ENCODE measurements at regions of chr19 and their contacts with region 1.

Region 1: GRCh38 chr19:49911381-49912145 is 14.9 kb upstream of the IL4I1 start:
- DNase-seq: no peak
- ATAC-seq: peak; percentile 80
- H3K4me3 Mint-ChIP-seq: peak overlapping the region; percentile 68
- H3K27ac Mint-ChIP-seq: peak overlapping the region; percentile 89
- H3K4me1 Mint-ChIP-seq: peaks cover 76% of the 10 kb centered on the region
- H3K27me3 Mint-ChIP-seq: no peaks in the 10 kb centered on the region
- CTCF ChIP-seq: no peak

Region 2: DNA sequence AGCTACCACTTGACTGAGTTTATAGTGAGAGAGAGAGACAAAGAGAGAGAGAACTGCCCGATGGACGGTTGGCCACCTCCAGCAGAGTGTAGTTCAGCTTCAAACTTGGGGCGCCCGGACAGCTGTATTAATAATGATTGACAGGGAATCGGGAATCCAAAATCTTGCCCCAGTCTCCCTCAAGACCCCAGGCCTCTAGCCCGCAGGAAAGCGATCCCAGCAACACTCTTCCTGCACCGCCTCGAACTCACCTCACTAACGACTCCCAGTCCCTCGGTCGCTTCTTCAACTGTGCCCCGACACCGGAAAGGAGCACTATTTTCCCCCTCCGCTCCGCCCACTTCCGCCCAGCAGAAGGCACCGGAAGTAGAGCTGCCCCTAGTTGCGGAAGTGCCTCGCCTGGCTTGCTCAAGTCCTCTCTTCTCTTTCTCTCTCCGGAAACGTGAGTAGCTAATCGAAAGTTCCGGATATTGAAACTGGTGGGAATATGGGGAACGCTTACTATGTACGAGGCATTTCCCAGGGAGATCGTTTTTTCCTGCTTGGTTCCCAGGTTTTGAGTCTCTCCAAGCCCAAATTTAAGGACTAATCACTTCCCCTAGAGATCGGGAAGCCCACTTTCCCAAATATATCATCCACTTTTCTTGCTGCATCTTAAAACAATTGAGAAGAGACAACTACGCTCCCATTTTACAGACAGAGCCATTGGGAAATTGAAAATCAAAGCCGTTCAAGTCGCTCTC is 331.1 kb before region 1 on chr19 and contains the start of gene NOSIP:
- CTCF ChIA-PET with region 1: no interaction called
- POLR2A ChIA-PET with region 1: no interaction called
- intact Hi-C with region 1: no loop called
- DNase-seq: peak; percentile 87
- ATAC-seq: peak; percentile 98
- H3K4me3 Mint-ChIP-seq: peak within 1 kb of the TSS; percentile 92
- H3K27ac Mint-ChIP-seq: peak within 1 kb of the TSS; percentile 84
- H3K4me1 Mint-ChIP-seq: peaks cover 24% of the 10 kb centered on the region
- H3K27me3 Mint-ChIP-seq: no peaks in the 10 kb centered on the region
- CTCF ChIP-seq: no peak
- total RNA-seq, gene NOSIP: 49.9 and 54.8 TPM in 2 replicates

Region 3: DNA sequence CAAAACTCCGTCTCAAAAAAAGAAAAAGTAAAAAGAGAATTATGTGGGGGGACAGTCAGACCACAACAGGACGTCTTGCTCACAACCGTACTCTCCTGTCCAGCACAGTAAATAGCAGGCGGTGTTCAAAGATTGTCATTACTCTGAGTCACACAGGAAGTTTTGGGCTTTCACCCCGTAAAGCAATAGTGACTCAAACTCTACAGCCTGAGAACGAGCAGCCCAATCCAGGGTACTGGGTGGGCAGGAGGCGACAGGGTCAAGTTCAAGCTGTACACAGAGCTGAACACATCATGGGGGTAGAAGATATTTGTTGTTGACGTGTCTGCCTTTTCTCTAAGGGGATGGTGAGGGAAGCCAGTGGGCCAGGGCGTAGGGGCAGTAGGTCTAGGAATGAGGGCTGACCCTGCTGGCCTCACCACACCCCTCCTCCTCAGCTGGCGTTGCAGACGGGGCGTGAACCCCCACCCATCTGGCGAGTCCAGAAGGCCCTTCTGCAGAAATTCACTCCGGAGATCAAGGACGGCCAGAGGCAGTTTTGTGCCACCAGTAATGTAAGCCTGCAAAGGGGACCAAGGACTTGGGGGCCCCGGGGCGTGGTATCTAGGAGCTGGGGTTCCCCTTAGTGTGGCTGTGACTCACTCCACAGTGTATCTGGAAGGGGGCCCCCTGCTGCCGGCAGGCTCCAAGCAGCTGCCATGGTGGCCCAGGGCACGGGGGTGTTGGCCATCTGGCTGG is 297.3 kb before region 1 on chr19:
- CTCF ChIA-PET with region 1: no interaction called
- POLR2A ChIA-PET with region 1: no interaction called
- intact Hi-C with region 1: no loop called
- DNase-seq: no peak
- ATAC-seq: peak; percentile 40
- H3K4me3 Mint-ChIP-seq: no peak overlapping the region
- H3K27ac Mint-ChIP-seq: peak overlapping the region; percentile 81
- H3K4me1 Mint-ChIP-seq: peaks cover 13% of the 10 kb centered on the region
- H3K27me3 Mint-ChIP-seq: no peaks in the 10 kb centered on the region
- CTCF ChIP-seq: no peak

Region 4: DNA sequence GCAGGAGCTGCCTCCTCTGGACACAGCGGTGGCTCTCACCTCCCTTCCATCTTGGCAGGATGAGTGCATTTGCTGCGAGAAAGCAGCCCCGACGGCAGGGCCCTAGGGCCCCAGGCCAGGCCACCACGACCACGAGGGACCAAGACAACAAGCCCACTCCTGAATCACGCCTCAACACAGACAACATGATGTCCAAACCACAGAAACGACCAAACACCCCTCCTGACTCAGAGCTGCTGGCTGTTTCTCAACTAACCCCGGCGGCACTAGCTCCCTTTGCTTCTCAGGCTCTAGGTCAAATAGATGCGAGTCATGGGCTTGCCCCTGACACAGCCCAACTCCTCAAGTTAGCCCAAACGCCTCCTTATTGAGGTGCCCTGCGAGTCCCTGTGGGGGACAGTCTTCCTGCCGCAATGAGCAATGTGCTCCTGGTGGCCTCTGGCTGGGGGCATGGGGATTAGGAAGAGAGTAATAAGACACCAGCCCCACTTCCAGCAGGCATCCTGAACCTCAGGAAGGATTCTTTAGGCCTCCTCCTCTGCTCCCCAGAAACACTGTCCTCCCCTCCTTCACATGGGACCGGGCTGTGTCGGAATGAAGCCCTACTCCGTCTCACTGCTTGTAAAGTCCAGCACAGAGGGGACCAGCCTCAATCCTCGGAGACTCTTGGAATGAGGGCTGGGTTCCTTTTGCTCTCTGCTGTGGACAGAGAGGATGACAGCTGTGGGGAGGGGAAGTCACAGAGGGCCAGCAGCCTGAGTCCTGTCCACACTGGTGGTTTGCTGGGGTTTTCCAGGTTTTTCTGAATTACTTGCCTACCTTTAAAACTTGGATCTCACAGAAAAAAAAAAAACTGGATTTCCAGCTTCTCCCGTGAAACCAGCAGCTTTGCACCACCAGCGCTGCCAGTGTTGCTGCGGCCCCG is 10.6 kb after region 1 on chr19:
- CTCF ChIA-PET with region 1: interaction called, 16 read pairs
- POLR2A ChIA-PET with region 1: interaction called, 166 read pairs
- intact Hi-C with region 1: no loop called
- DNase-seq: no peak
- ATAC-seq: no peak
- H3K4me3 Mint-ChIP-seq: no peak overlapping the region
- H3K27ac Mint-ChIP-seq: peak overlapping the region; percentile 88
- H3K4me1 Mint-ChIP-seq: peaks cover 77% of the 10 kb centered on the region
- H3K27me3 Mint-ChIP-seq: no peaks in the 10 kb centered on the region
- CTCF ChIP-seq: no peak

Region 5: GRCh38 chr19:50401605-50402450 is 490.3 kb after region 1 on chr19:
- CTCF ChIA-PET with region 1: no interaction called
- POLR2A ChIA-PET with region 1: no interaction called
- intact Hi-C with region 1: no loop called
- DNase-seq: no peak
- ATAC-seq: no peak
- H3K4me3 Mint-ChIP-seq: no peak overlapping the region
- H3K27ac Mint-ChIP-seq: no peak overlapping the region
- H3K4me1 Mint-ChIP-seq: no peaks in the 10 kb centered on the region
- H3K27me3 Mint-ChIP-seq: no peaks in the 10 kb centered on the region
- CTCF ChIP-seq: no peak